ENCODE measurements at regions of chr5 and their contacts with region 1.

Region 1: DNA sequence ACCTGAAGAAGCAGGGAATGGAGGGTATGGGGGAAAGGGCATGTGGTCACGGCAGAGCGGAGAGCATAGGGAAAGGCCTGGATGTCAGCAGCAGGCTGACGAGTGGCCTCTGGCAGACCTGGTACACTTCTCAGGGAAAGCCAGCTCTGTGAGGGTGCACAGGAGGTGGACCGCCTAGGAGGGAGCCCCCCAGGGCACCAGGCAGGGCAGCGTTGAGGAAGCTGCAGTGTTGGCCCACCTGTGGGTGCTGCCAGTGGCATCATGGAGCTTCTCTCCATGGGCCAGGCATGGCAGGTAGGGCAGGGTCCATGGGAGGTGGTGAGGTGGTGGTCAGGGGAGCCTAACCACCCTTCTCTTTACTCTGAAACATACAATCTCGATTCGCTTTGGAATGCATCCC is 143.0 kb upstream of the PITX1 start:
- DNase-seq: no peak
- H3K4me3 ChIP-seq: no peak overlapping the region
- CTCF ChIP-seq: no peak
- POLR2A ChIP-seq: no peak

Region 2: DNA sequence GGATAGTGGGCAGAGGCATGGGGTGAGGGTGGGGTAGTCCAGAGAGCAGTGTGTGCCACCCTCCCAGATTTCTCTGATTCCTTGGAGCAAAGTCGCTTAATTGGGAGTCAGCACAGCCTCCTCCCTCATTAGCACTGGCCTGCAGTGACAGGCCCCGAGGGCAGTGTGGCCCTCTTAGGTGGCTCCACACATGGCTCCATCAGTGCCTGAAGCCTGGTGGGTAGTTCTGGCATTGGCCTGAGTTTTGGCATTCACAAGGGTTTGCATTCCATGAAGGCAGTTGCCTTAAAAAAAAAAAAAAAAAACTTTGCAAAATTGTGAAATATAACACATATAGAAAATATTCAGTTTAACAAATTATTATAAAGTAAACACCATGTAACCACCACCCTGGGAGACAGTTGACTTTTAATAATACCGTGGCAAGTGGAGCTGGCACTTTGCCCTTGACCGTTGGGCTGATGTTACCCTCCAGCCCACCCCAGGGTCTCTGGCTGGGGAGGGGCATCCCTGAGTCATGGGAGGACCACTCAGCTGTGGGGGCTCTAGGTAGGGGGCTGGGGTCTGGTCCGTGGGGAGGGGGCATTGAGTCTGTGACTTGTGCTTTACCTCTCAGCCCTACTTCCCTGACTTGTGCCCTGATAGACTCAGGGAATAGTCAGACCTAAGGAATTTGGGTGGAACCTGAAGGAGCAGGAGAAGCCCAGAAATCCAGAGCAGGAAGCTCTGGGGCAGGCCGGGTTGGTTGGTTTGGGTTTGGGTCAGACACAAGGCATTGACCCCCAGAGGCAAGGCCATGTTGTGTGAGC is 91.7 kb before region 1 on chr5:
- intact Hi-C with region 1: no loop called
- DNase-seq: peak in 1 of 2 donors; percentile 64
- H3K4me3 ChIP-seq: no peak overlapping the region
- CTCF ChIP-seq: no peak
- POLR2A ChIP-seq: no peak

Region 3: DNA sequence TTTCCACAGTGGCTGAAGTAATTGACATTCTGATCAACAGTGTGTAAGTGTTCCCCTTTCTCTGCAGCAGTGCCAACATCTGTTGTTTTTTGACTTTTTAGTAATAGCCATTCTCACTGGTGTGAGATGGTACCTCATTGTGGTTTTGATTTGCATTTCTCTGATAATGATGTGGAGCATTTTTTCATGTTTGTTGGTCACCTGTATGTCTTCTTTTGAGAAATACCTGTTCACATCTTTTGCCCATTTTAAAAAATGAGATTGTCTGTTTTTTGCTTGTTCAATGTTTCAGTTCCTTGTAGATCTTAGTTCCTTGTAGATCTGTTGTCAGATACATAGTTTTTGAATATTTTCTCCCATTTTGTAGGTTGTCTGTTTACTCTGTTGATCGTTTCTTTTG is 19.5 kb after region 1 on chr5:
- intact Hi-C with region 1: loop called (anchors 1 kb)
- DNase-seq: no peak
- H3K4me3 ChIP-seq: no peak overlapping the region
- CTCF ChIP-seq: no peak
- POLR2A ChIP-seq: no peak

Region 4: GRCh38 chr5:135332519-135333150 is 155.6 kb after region 1 on chr5:
- intact Hi-C with region 1: no loop called
- DNase-seq: no peak
- H3K4me3 ChIP-seq: no peak overlapping the region
- CTCF ChIP-seq: no peak
- POLR2A ChIP-seq: no peak

Region 5: DNA sequence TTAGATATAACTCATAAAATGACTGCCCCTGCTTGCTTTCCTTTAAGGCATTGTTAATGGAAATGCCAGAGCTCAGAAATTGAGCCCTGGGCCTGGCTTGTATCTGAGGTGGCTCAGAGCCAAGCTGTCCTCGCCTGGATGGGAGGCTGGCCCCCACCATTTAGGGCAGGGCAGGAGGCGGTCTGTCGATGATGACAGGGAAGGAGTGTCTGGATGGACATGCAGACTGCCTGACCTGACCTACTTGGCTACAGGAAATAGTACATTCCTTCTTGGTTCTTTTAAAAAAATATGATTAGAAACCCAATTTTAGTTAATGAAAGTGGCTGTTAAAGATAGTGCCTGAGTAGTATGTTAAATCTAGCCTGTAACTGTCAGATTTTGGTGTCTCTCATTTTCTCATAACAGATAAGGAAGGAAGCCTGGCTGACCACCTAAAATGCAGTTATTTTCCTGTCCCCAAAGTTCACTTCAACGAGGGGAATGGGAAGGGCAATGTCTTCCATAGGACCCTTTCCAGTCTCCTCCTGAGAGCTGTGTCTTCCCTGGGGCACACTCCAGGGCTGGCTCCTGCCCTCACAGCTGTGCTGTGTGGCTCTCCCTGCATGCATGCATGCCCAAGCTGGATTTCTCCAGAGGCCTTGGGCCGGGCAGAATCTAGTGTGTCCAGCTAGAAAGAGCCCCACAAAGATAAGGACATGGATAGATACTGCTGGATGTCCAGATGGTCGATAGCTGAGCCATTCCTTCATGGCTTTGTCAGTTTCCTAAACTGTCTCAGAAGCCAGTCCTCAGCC is 179.7 kb after region 1 on chr5:
- intact Hi-C with region 1: no loop called
- DNase-seq: peak; percentile 58 to 90
- H3K4me3 ChIP-seq: no peak overlapping the region
- CTCF ChIP-seq: no peak
- POLR2A ChIP-seq: no peak

Region 6: DNA sequence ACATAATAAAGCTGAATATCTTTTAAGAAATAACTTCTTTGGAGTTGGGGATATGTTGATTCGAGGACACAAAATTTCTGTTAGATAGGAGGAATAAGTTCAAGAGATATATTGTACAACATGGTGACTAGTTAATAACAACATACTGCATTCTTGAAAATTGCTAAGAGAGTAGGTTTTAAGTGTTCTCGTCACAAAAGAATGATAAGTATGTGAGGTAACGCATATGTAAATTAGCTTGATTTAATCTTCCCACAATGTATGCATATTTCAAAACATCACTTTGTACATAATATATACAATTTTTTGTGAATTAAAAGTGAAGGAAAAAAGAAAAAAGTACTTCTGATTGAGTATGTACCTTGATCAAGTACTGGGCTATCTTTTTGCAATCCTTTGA is 1616.3 kb after region 1 on chr5:
- intact Hi-C with region 1: no loop called
- DNase-seq: no peak
- H3K4me3 ChIP-seq: no peak overlapping the region
- CTCF ChIP-seq: no peak
- POLR2A ChIP-seq: no peak